HepG2 (cell line): ENCODE measurements at regions of chr6 and their contacts with region 1.

Region 1: DNA sequence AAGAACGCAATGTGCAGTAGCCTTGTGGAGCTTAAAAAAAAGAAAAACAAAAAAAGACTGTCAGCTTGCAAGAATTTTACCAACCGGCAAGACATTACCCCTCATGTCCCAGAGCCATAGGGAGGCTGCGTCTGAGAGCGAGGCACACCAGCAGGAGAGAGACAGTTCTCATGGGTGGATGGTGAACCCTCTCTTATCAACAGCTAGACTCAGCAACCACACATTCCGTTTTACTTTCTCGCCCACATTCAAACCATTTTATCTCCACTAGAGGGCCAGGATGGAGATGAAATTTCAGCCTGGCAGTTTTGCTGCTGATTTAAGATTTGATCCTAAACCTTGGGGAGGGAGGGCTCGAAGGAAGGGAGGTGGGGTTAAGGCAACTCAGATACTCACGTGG is 247.0 kb downstream of the ATXN1 start:
- DNase-seq: peak; percentile 28
- ATAC-seq: peak; percentile 44
- H3K4me3 ChIP-seq: no peak overlapping the region
- H3K27ac ChIP-seq: no peak overlapping the region
- H3K4me1 ChIP-seq: peaks cover 20% of the 10 kb centered on the region
- H3K27me3 ChIP-seq: no peaks in the 10 kb centered on the region
- CTCF ChIP-seq: peak; percentile 43; the same call in 1 of the 2 replicates
- EP300 ChIP-seq: no peak
- POLR2A ChIP-seq: no peak
- RAD21 ChIP-seq: no peak

Region 2: GRCh38 chr6:16163535-16164300 is 350.5 kb before region 1 on chr6:
- CTCF ChIA-PET with region 1: no interaction called
- POLR2A ChIA-PET with region 1: no interaction called
- in situ Hi-C with region 1: no loop called
- intact Hi-C with region 1: no loop called
- DNase-seq: no peak
- ATAC-seq: no peak
- H3K4me3 ChIP-seq: no peak overlapping the region
- H3K27ac ChIP-seq: no peak overlapping the region
- H3K4me1 ChIP-seq: no peaks in the 10 kb centered on the region
- H3K27me3 ChIP-seq: peaks cover 0 to 29% of the 10 kb centered on the region in 2 experiments; a peak in 3 of 5 replicates
- CTCF ChIP-seq: no peak
- EP300 ChIP-seq: no peak
- POLR2A ChIP-seq: no peak
- RAD21 ChIP-seq: no peak

Region 3: DNA sequence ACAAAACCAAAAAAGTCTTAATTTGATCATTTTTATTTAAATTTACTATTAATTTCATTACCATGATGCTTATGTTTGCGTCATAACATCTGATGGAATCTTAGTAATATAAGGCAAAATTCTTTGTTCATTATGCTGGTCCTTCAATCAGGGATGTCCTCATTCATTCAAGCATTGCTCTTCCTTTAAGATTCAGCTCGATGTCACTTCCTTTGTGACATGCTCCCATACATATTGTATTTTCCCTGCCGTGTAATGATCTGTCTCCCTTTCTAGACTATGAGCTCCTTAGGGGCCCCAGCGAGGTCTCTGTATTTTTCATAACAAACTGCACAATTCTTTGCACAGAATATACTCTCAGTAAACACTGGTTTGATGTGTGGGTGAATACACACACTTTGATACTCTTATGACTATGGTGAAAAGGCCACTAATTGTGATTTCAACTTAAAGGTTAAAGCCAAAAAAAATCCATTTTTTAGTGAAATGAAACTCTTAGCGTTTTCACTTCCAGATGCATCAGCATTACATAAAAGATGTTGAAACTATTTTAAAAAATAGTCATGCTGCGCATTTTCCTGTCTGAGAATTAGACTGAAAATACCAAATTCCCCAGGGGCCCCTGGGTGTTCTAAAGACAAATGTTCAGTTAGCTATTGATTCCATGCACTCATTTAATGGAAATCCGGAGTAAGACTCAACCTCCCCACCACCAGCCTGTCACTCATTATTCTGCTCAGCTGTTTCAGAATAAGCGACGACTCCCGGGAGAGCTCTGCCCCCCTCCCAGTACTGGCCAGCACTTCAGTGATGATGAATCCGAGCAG is 77.4 kb after region 1 on chr6:
- CTCF ChIA-PET with region 1: no interaction called
- POLR2A ChIA-PET with region 1: no interaction called
- in situ Hi-C with region 1: no loop called
- intact Hi-C with region 1: loop called (anchors 2 kb)
- DNase-seq: no peak
- ATAC-seq: no peak
- H3K4me3 ChIP-seq: no peak overlapping the region
- H3K27ac ChIP-seq: no peak overlapping the region
- H3K4me1 ChIP-seq: peaks cover 33% of the 10 kb centered on the region
- H3K27me3 ChIP-seq: no peaks in the 10 kb centered on the region
- CTCF ChIP-seq: no peak
- EP300 ChIP-seq: no peak
- POLR2A ChIP-seq: no peak
- RAD21 ChIP-seq: no peak